Activated B cell treated with CpG ODN at 0.5 μM for 24 hours (primary cell): ENCODE measurements at regions of chr12 and their contacts with region 1.

Region 1: GRCh38 chr12:49763006-49763591 is 21.7 kb downstream of the TMBIM6 start:
- DNase-seq: peak; percentile 59
- ATAC-seq: peak; percentile 83
- H3K4me3 Mint-ChIP-seq: no peak overlapping the region
- H3K27ac Mint-ChIP-seq: peak overlapping the region; percentile 79
- H3K4me1 Mint-ChIP-seq: peaks cover 25% of the 10 kb centered on the region
- H3K27me3 Mint-ChIP-seq: no peaks in the 10 kb centered on the region
- CTCF ChIP-seq: no peak

Region 2: GRCh38 chr12:49636979-49637755 is 125.9 kb before region 1 on chr12:
- CTCF ChIA-PET with region 1: no interaction called
- POLR2A ChIA-PET with region 1: interaction called, 10 read pairs
- intact Hi-C with region 1: loop called (anchors 2 kb)
- DNase-seq: peak; percentile 22
- ATAC-seq: peak; percentile 94
- H3K4me3 Mint-ChIP-seq: no peak overlapping the region
- H3K27ac Mint-ChIP-seq: peak overlapping the region; percentile 22
- H3K4me1 Mint-ChIP-seq: peaks cover 27% of the 10 kb centered on the region
- H3K27me3 Mint-ChIP-seq: no peaks in the 10 kb centered on the region
- CTCF ChIP-seq: no peak

Region 3: DNA sequence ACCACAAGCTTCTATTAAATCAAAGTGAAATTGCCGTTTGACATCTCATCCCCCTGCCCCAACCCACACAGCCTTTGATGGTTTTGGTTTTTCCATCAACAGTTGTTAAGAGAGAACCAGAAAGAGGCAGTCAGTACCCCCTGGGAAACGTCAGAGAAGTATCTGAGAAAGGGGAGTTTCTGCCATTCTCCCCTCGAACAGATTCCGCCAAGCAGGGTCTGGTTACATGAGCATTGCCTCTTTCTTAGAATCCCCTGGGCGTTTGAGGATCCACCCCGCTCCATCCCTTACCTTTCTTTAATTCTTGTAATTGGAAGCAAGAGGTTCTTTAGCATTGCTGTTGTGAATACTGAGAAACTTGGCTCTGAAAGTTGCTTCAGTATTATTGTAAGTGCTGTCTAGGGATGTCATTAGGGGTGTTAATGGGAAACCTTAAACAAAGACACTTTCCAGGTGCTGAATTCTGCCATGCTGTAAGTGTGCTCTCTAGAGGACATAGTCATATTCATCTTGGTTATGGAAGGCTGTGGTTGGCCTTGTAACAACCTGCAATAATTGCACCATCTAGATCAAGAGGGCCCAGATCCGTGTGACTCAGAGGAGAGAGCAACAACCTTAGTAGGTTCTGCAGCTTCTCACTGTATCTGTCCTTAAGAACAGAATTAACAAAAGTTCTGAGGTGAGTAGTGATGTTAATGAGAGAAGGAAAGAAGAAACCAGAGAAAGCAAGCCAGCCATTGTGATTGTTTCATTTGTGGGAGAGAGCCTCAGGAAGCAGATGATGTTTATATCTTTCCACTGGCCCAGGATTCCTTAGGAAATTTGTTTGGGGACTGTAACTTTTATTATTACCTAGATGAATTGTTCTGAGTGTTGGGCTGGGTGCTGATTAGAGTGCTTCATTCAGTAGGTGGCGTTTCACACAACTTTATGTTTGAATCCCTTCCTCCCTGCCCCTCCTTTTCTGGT is 12.8 kb before region 1 on chr12:
- CTCF ChIA-PET with region 1: interaction called, 6 read pairs
- POLR2A ChIA-PET with region 1: interaction called, 4 read pairs
- intact Hi-C with region 1: loop called (anchors 1 kb)
- DNase-seq: no peak
- ATAC-seq: peak; percentile 55
- H3K4me3 Mint-ChIP-seq: peak overlapping the region; percentile 59
- H3K27ac Mint-ChIP-seq: peak overlapping the region; percentile 84
- H3K4me1 Mint-ChIP-seq: peaks cover 89% of the 10 kb centered on the region
- H3K27me3 Mint-ChIP-seq: no peaks in the 10 kb centered on the region
- CTCF ChIP-seq: no peak

Region 4: DNA sequence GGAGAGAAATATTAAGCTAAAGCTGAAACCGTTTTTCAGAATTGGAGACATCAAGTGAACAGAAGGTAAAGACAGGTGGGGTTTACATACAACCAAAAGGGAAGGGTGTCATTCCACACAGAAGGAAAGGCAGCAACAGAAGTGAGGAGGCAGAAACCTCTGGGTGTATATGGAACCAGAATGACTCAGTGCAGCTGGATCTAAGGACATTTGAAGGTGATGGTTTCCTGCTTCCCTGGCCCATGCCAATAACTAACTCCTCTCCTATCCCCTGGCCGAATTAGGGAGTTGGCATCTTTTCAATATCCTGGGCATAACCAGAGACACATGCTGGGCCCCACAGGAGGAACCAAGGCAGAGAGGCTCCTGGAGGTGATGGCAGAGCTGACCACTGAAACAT is 56.7 kb after region 1 on chr12:
- CTCF ChIA-PET with region 1: interaction called, 3 read pairs
- POLR2A ChIA-PET with region 1: interaction called, 10 read pairs
- intact Hi-C with region 1: no loop called
- DNase-seq: no peak
- ATAC-seq: no peak
- H3K4me3 Mint-ChIP-seq: no peak overlapping the region
- H3K27ac Mint-ChIP-seq: no peak overlapping the region
- H3K4me1 Mint-ChIP-seq: peaks cover 11% of the 10 kb centered on the region
- H3K27me3 Mint-ChIP-seq: no peaks in the 10 kb centered on the region
- CTCF ChIP-seq: no peak